AG04449 (cell line): ENCODE measurements at regions of chr11 and their contacts with region 1.

Region 1: DNA sequence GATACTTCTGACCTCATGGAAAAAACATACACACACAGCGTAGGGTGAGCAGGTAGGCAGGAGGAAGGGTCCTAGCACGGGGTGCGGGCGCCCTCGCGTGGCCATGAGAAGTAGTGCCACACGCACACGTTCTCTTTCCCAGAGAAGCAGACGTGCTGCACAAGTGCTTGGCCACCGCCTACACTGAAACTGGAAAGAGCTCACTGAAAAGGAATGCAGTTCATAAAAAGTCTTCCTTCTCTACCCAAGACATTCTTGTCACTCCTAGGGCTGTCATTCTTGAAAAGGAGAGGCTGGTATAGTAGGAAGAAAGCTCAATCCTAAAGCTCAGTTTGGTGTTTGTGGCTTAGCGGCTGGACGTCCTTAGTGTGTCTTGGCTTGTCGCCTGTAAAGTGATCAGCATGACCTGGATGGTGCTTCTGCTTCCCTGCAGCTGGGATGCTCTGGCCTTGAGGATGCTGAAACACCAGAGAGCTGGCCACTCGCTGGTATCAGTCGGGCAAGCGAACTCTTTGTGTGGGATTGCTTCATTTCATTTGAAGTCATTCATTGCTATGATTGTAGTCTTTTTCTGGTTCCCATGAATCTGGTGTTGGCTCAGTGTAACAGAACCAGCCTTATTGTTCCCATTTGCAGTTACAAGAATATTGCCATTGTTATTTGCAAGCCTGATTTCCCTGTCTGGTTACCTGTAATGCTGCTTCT is 303.8 kb downstream of the NTM start:
- DNase-seq: peak; percentile 64
- H3K4me3 ChIP-seq: no peak overlapping the region
- CTCF ChIP-seq: peak; percentile 98

Region 2: DNA sequence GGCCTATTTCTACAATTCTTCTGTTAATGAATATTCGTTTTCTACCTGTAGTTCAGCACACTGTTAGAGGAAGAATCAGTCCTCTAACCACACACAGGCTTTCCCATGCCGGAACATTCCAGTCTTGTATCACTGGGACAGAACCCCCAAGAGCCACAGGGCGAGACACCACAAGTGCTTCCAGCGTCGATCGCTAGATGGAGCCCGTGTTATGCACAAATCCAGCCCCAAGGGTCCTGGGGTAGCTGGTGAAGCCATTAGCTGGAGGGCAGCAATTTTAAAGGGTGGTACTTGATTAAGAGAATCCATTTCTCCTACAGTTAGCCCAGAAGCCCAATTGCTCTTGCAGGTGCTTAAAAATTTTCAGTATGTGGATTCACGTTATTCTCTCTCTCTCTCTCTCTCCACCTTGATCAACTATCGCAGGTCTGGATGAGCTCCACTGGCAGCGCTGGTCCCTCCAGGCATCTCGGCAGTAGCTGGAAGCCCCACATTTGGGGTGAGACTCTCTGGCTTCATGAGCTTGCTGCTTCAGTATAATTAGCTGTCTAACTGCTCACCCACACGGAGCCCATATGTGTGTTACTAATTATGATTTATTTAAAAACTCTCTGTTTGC is 609.7 kb before region 1 on chr11:
- CTCF ChIA-PET with region 1: interaction called, 79 read pairs
- POLR2A ChIA-PET with region 1: interaction called, 3 read pairs
- DNase-seq: no peak
- H3K4me3 ChIP-seq: no peak overlapping the region
- CTCF ChIP-seq: peak; percentile 87

Region 3: DNA sequence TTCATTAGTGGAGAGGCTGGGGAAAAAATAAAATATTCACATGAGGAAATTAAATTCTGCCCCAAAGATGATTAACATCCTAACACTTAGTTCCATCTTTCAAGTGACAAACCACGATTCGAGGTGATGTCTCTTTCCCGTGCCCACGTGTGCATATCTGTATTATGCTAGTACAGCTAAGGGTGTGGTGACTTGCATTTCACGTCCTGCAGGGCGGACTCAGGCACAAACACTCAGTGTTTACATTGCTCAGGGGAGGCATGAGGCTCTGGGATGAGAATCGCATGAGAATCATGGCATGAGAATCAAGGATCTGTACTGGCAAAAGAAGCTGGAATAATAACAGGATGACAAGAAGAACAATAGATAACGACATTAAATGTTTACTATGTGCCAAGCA is 124.4 kb before region 1 on chr11:
- CTCF ChIA-PET with region 1: interaction called, 10 read pairs
- POLR2A ChIA-PET with region 1: no interaction called
- DNase-seq: no peak
- H3K4me3 ChIP-seq: no peak overlapping the region
- CTCF ChIP-seq: no peak

Region 4: GRCh38 chr11:131591051-131591461 is 83.1 kb before region 1 on chr11:
- CTCF ChIA-PET with region 1: interaction called, 23 read pairs
- POLR2A ChIA-PET with region 1: no interaction called
- DNase-seq: no peak
- H3K4me3 ChIP-seq: no peak overlapping the region
- CTCF ChIP-seq: no peak

Region 5: GRCh38 chr11:131653260-131653659 is 20.9 kb before region 1 on chr11:
- CTCF ChIA-PET with region 1: interaction called, 19 read pairs
- POLR2A ChIA-PET with region 1: no interaction called
- DNase-seq: no peak
- H3K4me3 ChIP-seq: no peak overlapping the region
- CTCF ChIP-seq: no peak

Region 6: DNA sequence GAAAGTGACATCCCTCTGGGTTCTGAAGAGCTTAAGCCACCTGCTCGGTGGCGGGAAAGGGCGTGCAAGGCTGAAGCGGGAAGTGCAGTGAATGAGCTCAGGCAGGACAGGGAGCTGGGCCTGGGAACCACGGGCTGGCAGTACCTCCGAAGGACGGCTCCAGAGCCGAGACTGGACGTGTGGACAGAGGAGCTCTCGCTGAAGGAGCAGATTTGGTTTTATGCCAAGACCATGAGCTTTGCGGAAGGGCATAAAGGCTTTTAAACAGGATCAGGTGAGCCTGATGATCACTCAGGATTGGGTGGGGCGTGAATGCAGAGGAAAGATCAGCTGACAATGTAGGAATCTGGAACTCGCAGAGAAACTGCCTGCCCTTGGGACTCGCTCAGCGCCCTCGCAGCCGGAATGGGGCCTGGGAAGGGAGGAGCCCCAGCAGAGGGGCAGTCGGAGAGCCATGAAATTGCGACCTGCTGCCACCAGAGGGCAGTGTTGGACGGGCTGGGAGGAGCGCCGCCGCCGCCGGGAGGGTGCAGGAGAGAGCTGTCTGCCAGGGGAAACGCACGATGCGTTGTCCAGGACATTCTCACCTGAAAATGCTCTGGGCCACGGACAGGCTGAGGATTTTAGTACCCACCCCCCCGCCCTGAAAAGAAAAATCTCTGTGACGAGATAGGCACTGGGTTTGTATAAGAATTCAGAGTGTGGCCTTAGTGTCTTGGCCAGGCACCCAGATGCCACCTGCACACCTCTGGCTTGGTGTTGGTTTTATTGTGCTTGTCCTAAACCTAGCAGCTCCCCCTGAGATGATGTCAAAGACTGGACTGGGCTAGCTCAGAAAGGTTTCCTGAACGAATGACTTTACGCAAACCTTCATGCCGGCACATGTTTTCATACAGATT is 20.6 kb after region 1 on chr11:
- CTCF ChIA-PET with region 1: interaction called, 118 read pairs
- POLR2A ChIA-PET with region 1: no interaction called
- DNase-seq: no peak
- H3K4me3 ChIP-seq: no peak overlapping the region
- CTCF ChIP-seq: peak; percentile 100